CD8-positive, alpha-beta memory T cell (primary cell): ENCODE measurements at regions of chr19 and their contacts with region 1.

Region 1: DNA sequence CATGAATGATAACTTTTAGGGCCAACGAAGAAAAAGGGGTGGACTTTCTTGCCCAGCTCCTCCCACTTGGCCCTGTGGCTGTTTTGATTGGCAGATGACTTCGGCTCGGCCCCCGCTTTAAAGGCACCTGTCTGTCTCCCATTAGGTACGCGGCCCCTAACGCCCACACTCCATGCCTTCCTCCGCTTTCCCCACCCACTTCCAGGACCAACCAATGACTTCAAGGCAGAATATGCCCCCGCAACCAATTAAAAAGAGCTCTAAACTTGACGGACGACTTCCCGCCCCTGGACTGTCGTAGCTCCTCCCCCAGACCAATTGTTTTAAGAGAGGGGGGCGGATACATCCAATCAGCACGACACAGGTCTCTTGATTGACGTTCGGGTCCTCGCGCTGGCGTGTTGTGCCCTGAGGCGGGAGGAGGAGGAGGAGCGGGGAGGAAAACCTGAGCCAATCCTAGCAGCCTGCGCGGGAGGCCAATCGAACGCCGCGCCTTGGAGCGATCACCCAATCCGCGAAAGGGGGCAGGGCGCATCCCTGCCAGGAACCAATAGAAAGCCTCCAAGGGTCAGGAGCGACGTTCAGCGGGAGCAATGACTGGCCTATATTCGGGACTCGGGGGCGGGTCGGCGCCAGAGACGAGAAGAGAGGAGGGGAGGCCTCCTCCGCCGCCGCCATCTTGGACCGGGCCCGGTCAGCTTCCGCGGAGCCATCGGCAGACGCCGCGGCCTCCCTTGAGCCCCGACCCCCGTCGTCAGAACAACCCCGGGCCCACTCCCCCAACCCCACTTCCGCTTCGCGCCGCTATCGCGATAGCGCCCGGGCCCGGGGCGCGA is at the start of gene CNOT3:
- DNase-seq: peak; percentile 99 to 100 (median 100)
- H3K4me3 ChIP-seq: peak within 1 kb of the TSS; percentile 87
- H3K4me3 Mint-ChIP-seq: peak within 1 kb of the TSS; percentile 84 to 94 (median 90)
- H3K27ac ChIP-seq: peak within 1 kb of the TSS; percentile 90
- H3K27ac Mint-ChIP-seq: peak within 1 kb of the TSS; percentile 87 to 98 (median 92)
- H3K4me1 ChIP-seq: peaks cover 39% of the 10 kb centered on the region
- H3K4me1 Mint-ChIP-seq: peaks cover 40 to 56% (median 54%) of the 10 kb centered on the region in 3 donors
- H3K27me3 ChIP-seq: no peaks in the 10 kb centered on the region
- H3K27me3 Mint-ChIP-seq: peaks cover 0 to 1% of the 10 kb centered on the region in 2 donors
- total RNA-seq, gene CNOT3: 75.1 to 81.7 TPM

Region 2: GRCh38 chr19:54102421-54103169 is 34.7 kb before region 1 on chr19 and contains the start of gene NDUFA3:
- CTCF ChIA-PET with region 1: no interaction called
- POLR2A ChIA-PET with region 1: interaction called, 10 read pairs
- DNase-seq: peak; percentile 96 to 100 (median 97)
- H3K4me3 ChIP-seq: peak within 1 kb of the TSS; percentile 91
- H3K4me3 Mint-ChIP-seq: peak within 1 kb of the TSS; percentile 86 to 100 (median 98)
- H3K27ac ChIP-seq: peak within 1 kb of the TSS; percentile 76
- H3K27ac Mint-ChIP-seq: peak within 1 kb of the TSS; percentile 65 to 99 (median 97)
- H3K4me1 ChIP-seq: peaks cover 11% of the 10 kb centered on the region
- H3K4me1 Mint-ChIP-seq: peaks cover 21 to 37% (median 30%) of the 10 kb centered on the region in 3 donors
- H3K27me3 ChIP-seq: no peaks in the 10 kb centered on the region
- H3K27me3 Mint-ChIP-seq: no peaks in the 10 kb centered on the region
- total RNA-seq, gene NDUFA3: 117 to 124 TPM

Region 3: GRCh38 chr19:54159352-54160181 is 22.3 kb after region 1 on chr19 and contains the start of gene LENG1:
- CTCF ChIA-PET with region 1: interaction called, 7 read pairs
- POLR2A ChIA-PET with region 1: interaction called, 54 read pairs
- DNase-seq: peak; percentile 96 to 100 (median 99)
- H3K4me3 ChIP-seq: peak within 1 kb of the TSS; percentile 93
- H3K4me3 Mint-ChIP-seq: peak within 1 kb of the TSS; percentile 89 to 100 (median 99)
- H3K27ac ChIP-seq: peak within 1 kb of the TSS; percentile 85
- H3K27ac Mint-ChIP-seq: peak within 1 kb of the TSS; percentile 92 to 100 (median 99)
- H3K4me1 ChIP-seq: peaks cover 75% of the 10 kb centered on the region
- H3K4me1 Mint-ChIP-seq: peaks cover 57 to 76% (median 73%) of the 10 kb centered on the region in 3 donors
- H3K27me3 ChIP-seq: no peaks in the 10 kb centered on the region
- H3K27me3 Mint-ChIP-seq: peaks cover 4 to 6% of the 10 kb centered on the region in 2 donors
- total RNA-seq, gene LENG1: 4.8 to 6.8 TPM

Region 4: GRCh38 chr19:54189735-54190502 is 52.6 kb after region 1 on chr19:
- CTCF ChIA-PET with region 1: interaction called, 11 read pairs
- POLR2A ChIA-PET with region 1: interaction called, 60 read pairs
- DNase-seq: peak; percentile 100
- H3K4me3 ChIP-seq: peak overlapping the region; percentile 85
- H3K4me3 Mint-ChIP-seq: peak overlapping the region; percentile 88 to 99 (median 92)
- H3K27ac ChIP-seq: peak overlapping the region; percentile 100
- H3K27ac Mint-ChIP-seq: peak overlapping the region; percentile 97 to 100 (median 100)
- H3K4me1 ChIP-seq: peaks cover 22% of the 10 kb centered on the region
- H3K4me1 Mint-ChIP-seq: peaks cover 38 to 51% (median 41%) of the 10 kb centered on the region in 3 donors
- H3K27me3 ChIP-seq: no peaks in the 10 kb centered on the region
- H3K27me3 Mint-ChIP-seq: peaks cover 0 to 6% of the 10 kb centered on the region in 2 donors